Esophagus muscularis mucosa (tissue), 4 donors: ENCODE measurements at regions of chr10 and their contacts with region 1.

Region 1: GRCh38 chr10:123559066-123559822 is 106.9 kb upstream of the GPR26 start:
- DNase-seq: no peak
- H3K4me3 ChIP-seq: no peak overlapping the region
- H3K27ac ChIP-seq: no peak overlapping the region
- H3K4me1 ChIP-seq: peaks cover 0 to 9% (median 0%) of the 10 kb centered on the region in 4 donors
- H3K27me3 ChIP-seq: peaks cover 0 to 42% (median 0%) of the 10 kb centered on the region in 4 donors
- CTCF ChIP-seq: peak in 2 of 3 experiments; percentile 93 to 97
- EP300 ChIP-seq: no peak
- POLR2A ChIP-seq: no peak

Region 2: DNA sequence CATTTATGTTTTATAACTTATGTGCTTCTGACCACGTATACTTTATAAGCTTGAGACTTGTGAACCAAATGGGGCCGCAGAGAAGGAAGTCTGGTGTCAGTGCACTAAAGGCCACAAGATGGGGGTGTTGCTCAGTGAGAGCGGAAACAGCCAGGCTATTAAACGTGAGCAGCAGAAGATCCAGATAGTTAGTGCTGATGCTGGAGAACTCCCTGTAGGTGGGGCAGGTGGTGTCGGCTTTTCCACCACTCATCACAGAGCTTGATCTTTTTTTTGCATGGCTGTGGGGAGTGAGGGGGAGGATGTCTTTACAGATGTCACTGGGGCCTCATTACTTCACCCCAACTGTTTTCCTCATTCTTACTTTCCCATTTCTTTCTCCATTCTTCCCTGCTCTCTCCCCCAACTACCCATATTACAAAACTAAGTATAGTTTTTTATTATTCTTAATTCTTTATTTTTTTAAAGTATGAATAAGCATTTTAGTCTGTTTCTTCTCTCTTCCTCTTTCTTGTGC is 515.8 kb before region 1 on chr10:
- intact Hi-C with region 1: loop called (anchors 10 kb)
- DNase-seq: no peak
- H3K4me3 ChIP-seq: no peak overlapping the region
- H3K27ac ChIP-seq: no peak overlapping the region
- H3K4me1 ChIP-seq: no peaks in the 10 kb centered on the region
- H3K27me3 ChIP-seq: no peaks in the 10 kb centered on the region
- CTCF ChIP-seq: peak; percentile 43 to 59 (median 45)
- EP300 ChIP-seq: no peak
- POLR2A ChIP-seq: no peak

Region 3: GRCh38 chr10:123132576-123133477 is 426.4 kb before region 1 on chr10:
- intact Hi-C with region 1: loop called (anchors 1 kb)
- DNase-seq: peak; percentile 96
- H3K4me3 ChIP-seq: peak overlapping the region; percentile 8 to 45 (median 14)
- H3K27ac ChIP-seq: no peak overlapping the region
- H3K4me1 ChIP-seq: peaks cover 45 to 56% (median 55%) of the 10 kb centered on the region in 4 donors
- H3K27me3 ChIP-seq: peaks cover 29 to 99% (median 68%) of the 10 kb centered on the region in 4 donors
- CTCF ChIP-seq: peak; percentile 79 to 96 (median 86)
- EP300 ChIP-seq: no peak
- POLR2A ChIP-seq: no peak